ENCODE measurements at regions of chr16 and their contacts with region 1.

Region 1: DNA sequence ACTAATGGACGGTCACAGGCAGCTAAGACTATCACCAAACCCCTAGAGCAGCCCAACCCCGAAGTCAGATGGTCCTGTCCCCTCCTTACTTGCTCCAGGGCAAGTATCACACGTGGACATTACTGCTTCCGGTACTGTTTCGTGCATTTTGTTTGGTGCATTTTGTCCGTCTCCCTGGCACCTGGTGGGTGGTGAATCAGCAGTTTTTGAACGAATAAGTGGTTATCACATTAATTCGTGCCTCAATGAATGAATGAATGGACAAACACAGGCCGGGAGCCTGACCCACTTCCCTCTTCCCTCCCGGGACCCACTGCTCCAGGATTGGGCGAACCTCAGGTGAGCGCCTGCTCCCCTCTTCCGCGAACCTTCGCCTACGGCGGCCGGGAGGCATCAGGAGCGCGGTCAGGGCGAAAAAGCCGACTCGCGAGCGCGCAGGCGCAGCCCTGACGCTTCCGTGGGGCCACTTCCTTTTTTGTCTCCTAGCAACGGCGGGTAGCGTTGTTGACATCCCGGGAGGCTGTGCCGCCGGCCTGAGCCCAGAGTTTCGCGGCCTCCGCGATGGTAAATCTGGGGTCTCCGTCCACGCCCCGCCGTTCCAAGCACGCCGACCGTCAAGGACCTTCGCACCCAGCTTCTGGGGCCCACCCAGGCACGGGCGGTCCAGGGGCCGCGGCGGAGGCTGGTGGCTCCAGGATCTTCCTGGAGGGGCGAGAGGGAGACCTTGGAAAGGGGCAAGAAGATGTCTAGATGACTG is at the start of gene DYNLRB2:
- DNase-seq: no peak
- H3K4me3 ChIP-seq: no peak within 1 kb of the TSS
- H3K4me1 ChIP-seq: no peaks in the 10 kb centered on the region
- H3K27me3 ChIP-seq: no peaks in the 10 kb centered on the region

Region 2: GRCh38 chr16:80974649-80975376 is 434.1 kb after region 1 on chr16:
- in situ Hi-C with region 1: loop called (anchors 25 kb)
- DNase-seq: no peak
- H3K4me3 ChIP-seq: no peak overlapping the region
- H3K4me1 ChIP-seq: no peaks in the 10 kb centered on the region; the same call in 1 of the 2 replicates
- H3K27me3 ChIP-seq: no peaks in the 10 kb centered on the region